Caco-2 (cell line): ENCODE measurements at regions of chr1 and their contacts with region 1.

Region 1: DNA sequence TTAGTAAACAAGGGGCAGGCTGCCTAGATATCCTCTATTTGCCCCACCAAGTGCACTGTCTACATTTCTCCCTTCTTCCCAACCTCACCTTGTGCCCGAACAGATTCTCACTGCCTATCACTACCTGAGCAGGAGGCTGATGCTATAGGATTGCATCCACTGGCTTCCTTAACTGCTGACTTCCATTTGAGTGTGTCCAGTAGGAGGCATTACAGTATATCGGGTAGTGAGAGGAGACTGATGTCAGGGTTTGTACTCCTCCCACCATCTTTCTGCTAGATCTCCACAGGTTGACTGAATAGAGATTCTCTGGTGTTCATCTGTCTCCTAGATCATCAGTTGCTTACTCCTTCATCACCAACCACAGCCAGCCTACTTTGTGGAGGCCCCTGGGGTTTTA is 796.3 kb downstream of the LRRIQ3 start:
- DNase-seq: no peak
- H3K4me3 ChIP-seq: no peak overlapping the region
- H3K4me3 Mint-ChIP-seq: no peak overlapping the region
- H3K27ac Mint-ChIP-seq: no peak overlapping the region
- H3K4me1 ChIP-seq: no peaks in the 10 kb centered on the region
- H3K4me1 Mint-ChIP-seq: no peaks in the 10 kb centered on the region
- H3K27me3 ChIP-seq: no peaks in the 10 kb centered on the region
- H3K27me3 Mint-ChIP-seq: no peaks in the 10 kb centered on the region
- CTCF ChIP-seq: no peak

Region 2: DNA sequence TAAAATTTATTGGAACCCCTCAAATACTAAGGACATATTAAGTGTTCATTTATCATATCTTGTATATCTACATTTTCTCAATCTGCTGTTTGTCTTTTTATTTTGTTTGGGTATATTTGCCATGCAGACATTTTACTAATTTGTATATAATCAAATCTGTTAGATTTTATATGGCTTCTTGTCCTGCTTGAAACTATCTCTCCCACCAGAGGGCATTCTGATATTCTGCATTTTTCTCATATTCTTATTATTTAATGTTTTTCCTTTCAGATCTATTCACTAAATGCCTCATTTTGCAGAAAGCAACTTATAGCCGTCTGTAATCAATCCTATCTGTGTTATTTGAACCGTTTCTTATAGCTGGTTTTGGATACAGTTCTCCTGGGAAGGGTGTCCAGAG is 50.9 kb after region 1 on chr1:
- CTCF ChIA-PET with region 1: no interaction called
- POLR2A ChIA-PET with region 1: no interaction called
- intact Hi-C with region 1: no loop called
- DNase-seq: no peak
- H3K4me3 ChIP-seq: no peak overlapping the region
- H3K4me3 Mint-ChIP-seq: no peak overlapping the region
- H3K27ac Mint-ChIP-seq: no peak overlapping the region
- H3K4me1 ChIP-seq: no peaks in the 10 kb centered on the region
- H3K4me1 Mint-ChIP-seq: no peaks in the 10 kb centered on the region
- H3K27me3 ChIP-seq: no peaks in the 10 kb centered on the region
- H3K27me3 Mint-ChIP-seq: no peaks in the 10 kb centered on the region
- CTCF ChIP-seq: no peak

Region 3: GRCh38 chr1:73576083-73576482 is 174.4 kb after region 1 on chr1:
- CTCF ChIA-PET with region 1: no interaction called
- POLR2A ChIA-PET with region 1: no interaction called
- intact Hi-C with region 1: no loop called
- DNase-seq: no peak
- H3K4me3 ChIP-seq: no peak overlapping the region
- H3K4me3 Mint-ChIP-seq: no peak overlapping the region
- H3K27ac Mint-ChIP-seq: no peak overlapping the region
- H3K4me1 ChIP-seq: no peaks in the 10 kb centered on the region
- H3K4me1 Mint-ChIP-seq: no peaks in the 10 kb centered on the region
- H3K27me3 ChIP-seq: no peaks in the 10 kb centered on the region
- H3K27me3 Mint-ChIP-seq: no peaks in the 10 kb centered on the region
- CTCF ChIP-seq: no peak

Region 4: DNA sequence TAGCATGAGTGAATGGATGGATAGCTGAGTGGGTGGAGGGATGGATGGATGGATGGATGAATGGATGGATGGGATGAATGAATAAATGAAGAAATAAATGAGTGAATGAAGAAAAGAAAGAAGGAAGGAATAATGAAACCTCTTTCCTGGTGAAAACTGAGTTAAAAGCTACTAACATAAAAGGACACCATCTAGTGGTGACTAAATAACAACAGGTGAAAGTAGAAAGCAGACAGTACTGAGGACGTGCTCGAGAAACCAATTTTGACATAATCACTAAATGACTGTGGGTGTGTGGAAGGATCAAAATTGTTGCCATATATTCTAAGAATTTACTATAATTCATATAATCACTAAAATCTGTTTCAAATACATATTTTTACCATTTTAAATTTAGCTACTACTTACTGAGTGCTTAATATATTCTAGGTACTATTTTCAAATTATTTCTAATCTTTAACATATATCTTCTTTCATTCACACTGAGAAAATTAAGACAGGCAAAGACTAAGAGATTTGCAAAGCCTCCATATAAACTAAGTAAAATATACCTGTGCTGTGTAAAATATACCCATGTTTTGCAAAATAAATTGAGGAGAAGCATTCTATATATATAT is 273.4 kb after region 1 on chr1:
- CTCF ChIA-PET with region 1: no interaction called
- POLR2A ChIA-PET with region 1: no interaction called
- intact Hi-C with region 1: loop called (anchors 5 kb)
- DNase-seq: no peak
- H3K4me3 ChIP-seq: no peak overlapping the region
- H3K4me3 Mint-ChIP-seq: no peak overlapping the region
- H3K27ac Mint-ChIP-seq: no peak overlapping the region
- H3K4me1 ChIP-seq: no peaks in the 10 kb centered on the region
- H3K4me1 Mint-ChIP-seq: no peaks in the 10 kb centered on the region
- H3K27me3 ChIP-seq: no peaks in the 10 kb centered on the region
- H3K27me3 Mint-ChIP-seq: no peaks in the 10 kb centered on the region
- CTCF ChIP-seq: peak in 1 of 2 experiments; percentile 20